ENCODE measurements at regions of chr9 and their contacts with region 1.

Region 1: GRCh38 chr9:79571309-79572031 is at the start of gene TLE4:
- DNase-seq: peak; percentile 100

Region 2: DNA sequence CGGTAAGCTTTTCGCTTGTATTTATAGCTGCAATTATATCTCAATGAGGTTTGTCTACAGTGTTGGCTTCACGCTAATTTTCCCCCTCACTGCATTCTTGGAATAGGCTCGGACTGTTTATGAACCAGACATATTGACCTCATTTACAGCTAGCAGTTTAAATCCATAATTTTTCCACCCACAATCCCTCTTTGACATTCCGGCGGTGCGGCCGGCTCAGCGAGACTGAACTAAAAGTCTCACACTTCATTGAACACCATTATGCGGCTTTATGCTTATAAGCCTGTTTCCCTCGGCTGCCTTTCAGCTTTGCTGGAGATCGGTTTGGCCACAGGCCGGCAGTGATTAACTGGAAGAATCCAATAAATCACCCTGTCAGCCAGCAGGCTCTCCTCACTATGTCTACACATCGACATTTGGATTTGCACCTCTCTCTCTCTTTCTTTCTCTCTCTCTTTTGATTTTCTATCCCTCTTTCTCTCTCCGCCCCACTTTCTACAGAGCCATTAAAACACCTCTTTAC is 314.7 kb before region 1 on chr9:
- CTCF ChIA-PET with region 1: interaction called, 9 read pairs
- POLR2A ChIA-PET with region 1: interaction called, 59 read pairs
- DNase-seq: peak; percentile 98

Region 3: GRCh38 chr9:79489247-79489985 is 82.1 kb before region 1 on chr9:
- CTCF ChIA-PET with region 1: interaction called, 3 read pairs
- POLR2A ChIA-PET with region 1: interaction called, 28 read pairs
- DNase-seq: no peak

Region 4: GRCh38 chr9:79583952-79584654 is 12.6 kb after region 1 on chr9:
- CTCF ChIA-PET with region 1: interaction called, 3 read pairs
- POLR2A ChIA-PET with region 1: interaction called, 92 read pairs
- DNase-seq: no peak

Region 5: DNA sequence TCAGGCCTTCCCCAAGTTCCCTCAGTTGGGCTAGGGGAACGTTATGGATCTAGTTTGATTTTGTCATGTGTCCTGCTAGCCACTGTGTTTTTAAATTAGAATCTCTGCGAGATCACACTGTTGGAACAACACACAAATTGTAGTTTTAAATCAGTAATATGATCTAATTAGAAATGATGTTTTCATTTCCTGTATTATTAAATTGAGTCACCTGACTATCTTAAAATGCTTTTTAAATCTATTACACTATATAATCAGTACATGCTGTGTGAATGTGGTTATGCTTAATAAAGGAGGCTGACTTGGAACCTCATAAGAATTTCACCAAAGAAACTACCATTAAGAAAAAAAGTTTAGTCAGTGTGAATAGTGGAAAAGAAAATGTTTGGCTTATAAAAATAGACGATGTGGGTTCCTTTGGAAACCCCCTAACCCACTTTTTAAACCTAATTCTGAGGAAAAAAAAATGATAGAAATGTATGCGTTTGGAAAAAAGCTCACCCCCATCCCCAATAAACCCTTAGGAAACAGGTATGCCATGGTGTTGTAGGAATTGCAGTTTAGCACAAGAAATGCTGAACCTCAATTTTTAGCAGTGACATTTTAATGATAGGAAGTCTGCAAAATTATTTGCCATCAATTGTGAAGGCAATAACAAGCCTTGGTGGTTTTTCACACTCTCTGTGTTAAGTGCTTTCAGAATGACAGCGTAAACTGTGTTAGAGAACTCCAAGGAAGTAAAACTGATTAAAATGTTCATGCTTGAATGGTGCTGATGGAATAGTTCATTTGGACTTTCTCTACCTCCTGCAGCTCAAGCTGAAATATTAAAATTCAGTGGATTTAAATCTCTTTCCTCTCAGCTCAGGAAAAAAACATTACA is 59.3 kb after region 1 on chr9:
- CTCF ChIA-PET with region 1: no interaction called
- POLR2A ChIA-PET with region 1: interaction called, 10 read pairs
- DNase-seq: no peak

Region 6: GRCh38 chr9:79694676-79695400 is 123.4 kb after region 1 on chr9:
- CTCF ChIA-PET with region 1: interaction called, 3 read pairs
- POLR2A ChIA-PET with region 1: interaction called, 13 read pairs
- DNase-seq: no peak

Region 7: GRCh38 chr9:80156756-80157472 is 585.4 kb after region 1 on chr9:
- CTCF ChIA-PET with region 1: no interaction called
- POLR2A ChIA-PET with region 1: interaction called, 15 read pairs
- DNase-seq: no peak